Left colon (tissue), 2 donors: ENCODE measurements at regions of chr16 and their contacts with region 1.

Region 1: DNA sequence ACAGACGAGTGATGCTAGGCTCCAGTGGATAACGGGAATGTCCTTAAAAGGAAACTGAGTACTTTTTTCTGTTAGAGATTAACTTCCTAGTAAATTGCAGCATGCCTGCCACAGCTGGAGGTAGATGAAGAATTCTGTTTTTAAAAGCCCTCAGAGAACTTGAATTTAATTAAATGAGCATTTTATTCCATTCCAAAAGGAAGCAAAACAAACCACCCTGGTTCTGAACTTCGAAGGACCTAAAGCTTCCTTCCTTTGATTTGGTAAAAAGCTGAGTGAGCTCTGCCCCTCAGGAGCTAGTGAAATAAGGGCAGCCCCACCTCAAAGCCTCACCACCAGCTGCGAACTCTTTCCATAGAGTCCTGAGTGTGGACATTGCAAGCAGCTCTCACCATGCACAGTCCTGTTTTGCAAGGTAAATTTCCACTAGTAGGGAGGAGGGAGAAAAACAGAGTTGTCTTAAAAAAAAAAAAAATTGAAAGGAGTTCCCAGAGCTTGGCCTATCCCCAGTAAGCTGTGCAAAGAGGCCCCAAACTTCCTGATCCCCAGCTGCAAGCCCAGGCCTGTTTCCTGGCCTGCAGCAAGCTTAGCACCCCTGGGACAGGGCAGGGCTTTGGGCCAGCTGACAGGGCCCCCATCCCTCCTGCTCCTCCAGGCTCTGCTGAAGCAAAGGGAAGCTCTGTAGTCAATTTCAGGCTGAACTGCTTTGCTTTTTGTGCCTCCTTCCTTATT is 11.2 kb downstream of the CHD9NB start:
- DNase-seq: peak in 1 of 2 donors; percentile 59
- ATAC-seq: peak; percentile 26

Region 2: GRCh38 chr16:53207810-53208752 is 166.6 kb after region 1 on chr16:
- intact Hi-C with region 1: loop called in 1 of 2 experiments (anchors 5 kb)
- DNase-seq: peak; percentile 39 to 48
- ATAC-seq: peak; percentile 93

Region 3: DNA sequence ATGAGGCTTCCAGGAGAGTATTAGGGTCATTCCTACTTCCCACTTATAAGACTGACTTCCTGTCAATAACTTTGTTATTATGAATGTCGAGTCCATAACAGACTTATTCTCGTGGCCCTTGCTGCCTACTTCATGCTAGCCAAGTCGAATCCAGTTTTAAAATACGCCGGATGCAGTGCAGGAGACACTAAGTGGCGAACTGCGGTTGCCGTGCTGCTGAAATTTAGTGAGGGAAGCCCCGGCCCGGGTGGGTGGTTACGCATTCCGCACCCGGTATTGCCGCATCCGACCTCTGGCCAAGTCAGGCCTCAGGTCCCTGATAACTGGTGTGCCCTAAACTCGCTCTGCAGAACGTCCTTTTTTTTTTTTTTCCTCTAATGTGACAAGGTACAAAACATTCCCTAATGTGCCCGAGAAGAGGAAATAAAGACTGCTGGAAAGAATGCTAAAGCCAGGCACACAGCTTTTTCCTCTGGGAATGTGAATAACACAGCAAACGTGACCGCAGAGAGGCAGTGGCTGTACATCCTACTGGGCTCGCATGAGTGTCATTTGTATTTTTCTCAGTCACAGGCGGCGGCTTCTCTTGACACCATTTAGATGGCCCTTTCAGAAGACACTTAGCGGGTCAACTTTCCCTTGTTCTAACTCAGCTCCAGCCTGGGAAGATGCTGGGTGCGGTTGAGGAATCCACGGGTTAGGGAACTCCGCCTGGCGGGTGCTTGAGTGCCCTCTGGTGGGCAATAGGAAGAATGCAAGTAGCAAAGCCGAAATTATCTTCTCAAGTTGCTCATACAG is 468.6 kb after region 1 on chr16:
- intact Hi-C with region 1: loop called in 1 of 2 experiments (anchors 10 kb)
- DNase-seq: peak; percentile 52 to 64
- ATAC-seq: peak; percentile 81